Activated naive CD4-positive, alpha-beta T cell treated with anti-CD3 and anti-CD28 coated beads, Interleukin-2, amount 10 ng/mL, durations not matched to agents 7 days and 5 days (primary cell): ENCODE measurements at regions of chr1 and their contacts with region 1.

Region 1: GRCh38 chr1:155017041-155017945 is 14.7 kb downstream of the ZBTB7B start:
- DNase-seq: peak; percentile 90
- H3K4me3 Mint-ChIP-seq: peak overlapping the region; percentile 26
- H3K27ac Mint-ChIP-seq: peak overlapping the region; percentile 83
- H3K4me1 Mint-ChIP-seq: peaks cover 71% of the 10 kb centered on the region
- H3K27me3 Mint-ChIP-seq: no peaks in the 10 kb centered on the region

Region 2: DNA sequence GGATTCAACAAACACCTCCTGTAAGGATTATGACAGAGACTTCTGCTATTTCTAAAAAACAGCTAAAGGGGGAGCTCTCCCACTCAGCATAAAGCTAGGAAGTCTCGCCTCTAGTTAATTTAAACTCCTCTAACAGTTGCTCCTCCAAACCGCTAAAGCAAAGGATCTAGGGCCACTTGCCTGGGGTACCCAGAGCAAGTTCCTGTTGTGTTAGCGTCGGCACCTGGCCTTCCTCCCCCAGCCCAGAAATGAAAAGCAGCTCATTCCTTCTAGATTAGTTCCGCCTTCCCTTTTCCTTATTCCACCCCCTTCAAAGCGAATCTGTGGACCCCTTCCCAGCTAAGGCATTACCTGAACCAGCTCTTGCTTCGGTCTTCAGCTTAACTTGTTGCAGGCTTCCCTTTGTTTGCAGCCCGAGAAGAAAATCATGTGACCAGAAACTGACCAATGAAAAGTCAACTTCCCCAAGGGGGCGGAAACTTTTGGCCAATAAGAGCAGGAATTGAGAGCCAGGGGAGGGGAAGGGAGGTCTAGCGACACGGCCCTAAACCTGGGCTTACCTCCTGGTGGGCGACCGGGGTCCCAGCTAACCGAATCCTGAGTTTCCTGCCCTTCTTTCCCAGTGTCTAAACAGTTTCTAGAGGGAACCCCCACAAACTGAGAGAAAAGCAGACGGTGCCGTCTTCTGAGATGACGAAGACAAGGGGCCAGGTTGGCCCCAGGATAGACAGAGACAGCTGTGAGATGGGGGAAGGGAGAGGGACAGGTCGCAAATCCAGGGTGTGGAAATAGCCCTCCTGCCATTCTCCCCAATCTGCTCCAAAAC is 61.4 kb before region 1 on chr1 and contains the start of gene PBXIP1:
- CTCF ChIA-PET with region 1: interaction called, 13 read pairs
- DNase-seq: peak; percentile 89
- H3K4me3 Mint-ChIP-seq: peak within 1 kb of the TSS; percentile 88
- H3K27ac Mint-ChIP-seq: peak within 1 kb of the TSS; percentile 93
- H3K4me1 Mint-ChIP-seq: peaks cover 84% of the 10 kb centered on the region
- H3K27me3 Mint-ChIP-seq: no peaks in the 10 kb centered on the region

Region 3: DNA sequence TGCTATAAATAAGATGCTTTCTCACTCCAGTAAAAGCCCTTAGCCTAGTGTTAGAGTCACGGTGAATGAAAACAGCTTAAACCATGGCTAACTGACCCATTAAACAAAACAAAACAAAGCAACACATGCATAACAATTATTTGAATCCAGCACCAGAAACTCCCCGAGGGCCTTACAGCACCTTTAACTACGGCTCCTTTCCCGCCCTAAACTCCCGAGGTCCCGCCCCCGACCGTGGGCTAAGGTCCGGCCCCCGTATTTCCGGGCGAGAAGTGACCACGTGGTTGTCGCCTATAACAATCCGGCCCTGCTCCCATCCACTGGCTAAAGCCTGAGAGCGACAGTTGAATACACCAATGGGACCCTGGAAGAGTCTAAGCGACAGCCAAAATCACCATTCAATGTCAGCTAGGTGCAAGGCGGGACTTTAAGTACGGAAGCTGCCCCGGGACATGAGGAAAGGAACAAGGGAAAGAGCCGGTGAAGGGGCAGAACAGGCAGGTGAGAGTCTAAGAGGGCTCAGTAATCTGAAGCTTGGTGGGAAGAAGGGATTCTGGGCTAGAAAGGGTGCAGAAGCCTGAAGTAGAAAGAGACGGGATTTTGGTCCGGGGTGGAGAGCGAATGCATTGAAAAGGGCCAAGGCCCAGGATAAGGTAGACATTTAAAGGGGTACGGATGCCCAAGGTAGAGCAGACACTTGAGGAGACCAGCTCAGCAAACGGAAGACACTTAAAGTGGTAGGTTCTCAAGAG is 34.2 kb before region 1 on chr1 and contains the start of gene FLAD1:
- CTCF ChIA-PET with region 1: interaction called, 26 read pairs
- DNase-seq: peak; percentile 98
- H3K4me3 Mint-ChIP-seq: no peak within 1 kb of the TSS
- H3K27ac Mint-ChIP-seq: no peak within 1 kb of the TSS
- H3K4me1 Mint-ChIP-seq: peaks cover 30% of the 10 kb centered on the region
- H3K27me3 Mint-ChIP-seq: no peaks in the 10 kb centered on the region

Region 4: GRCh38 chr1:154992721-154993571 is 24.3 kb before region 1 on chr1:
- CTCF ChIA-PET with region 1: interaction called, 48 read pairs
- DNase-seq: no peak
- H3K4me3 Mint-ChIP-seq: no peak overlapping the region
- H3K27ac Mint-ChIP-seq: no peak overlapping the region
- H3K4me1 Mint-ChIP-seq: peaks cover 27% of the 10 kb centered on the region
- H3K27me3 Mint-ChIP-seq: no peaks in the 10 kb centered on the region

Region 5: DNA sequence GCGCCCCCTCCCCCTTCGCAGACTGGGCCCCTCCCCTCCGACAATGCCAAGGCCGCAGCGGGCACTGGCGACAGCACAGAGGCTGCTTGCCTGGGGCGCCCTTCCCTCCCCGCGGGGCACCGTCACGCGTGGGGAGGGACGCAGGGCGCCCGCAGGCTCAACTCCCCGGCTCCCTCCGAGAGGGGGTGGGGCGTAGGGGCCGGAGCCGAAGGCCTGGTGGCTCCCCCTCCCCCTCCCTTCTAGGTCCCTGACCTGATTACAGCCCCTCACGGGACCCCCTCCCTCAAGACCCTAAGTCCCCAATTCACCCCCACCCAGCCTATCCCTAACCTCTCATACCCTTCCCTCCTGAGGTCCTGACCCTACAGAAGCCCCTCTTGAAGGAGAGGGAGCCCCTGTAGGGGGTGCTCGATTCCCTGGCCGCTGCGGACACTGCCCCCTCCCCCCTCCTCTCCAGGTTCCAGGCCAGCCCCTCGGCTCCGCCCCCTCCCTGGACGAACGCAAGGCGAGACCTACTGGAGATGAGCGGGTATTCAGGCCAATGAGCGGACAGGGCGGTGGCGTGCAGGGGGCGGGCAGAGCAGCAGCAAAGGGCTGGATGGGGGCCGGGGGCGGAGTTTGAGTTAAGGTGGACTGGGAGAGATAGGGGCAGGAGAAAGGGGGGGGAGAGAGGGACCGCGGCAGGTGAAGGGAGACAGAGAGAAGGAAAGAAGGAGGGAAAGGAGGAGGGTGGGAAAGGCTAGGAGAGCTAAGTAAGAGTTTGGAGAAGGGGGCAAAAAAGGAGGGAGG is 15.4 kb before region 1 on chr1:
- CTCF ChIA-PET with region 1: interaction called, 48 read pairs
- DNase-seq: peak; percentile 100
- H3K4me3 Mint-ChIP-seq: peak overlapping the region; percentile 92
- H3K27ac Mint-ChIP-seq: peak overlapping the region; percentile 95
- H3K4me1 Mint-ChIP-seq: peaks cover 61% of the 10 kb centered on the region
- H3K27me3 Mint-ChIP-seq: peaks cover 4% of the 10 kb centered on the region

Region 6: GRCh38 chr1:155044812-155045690 is 27.8 kb after region 1 on chr1:
- CTCF ChIA-PET with region 1: interaction called, 14 read pairs
- DNase-seq: peak; percentile 83
- H3K4me3 Mint-ChIP-seq: no peak overlapping the region
- H3K27ac Mint-ChIP-seq: no peak overlapping the region
- H3K4me1 Mint-ChIP-seq: peaks cover 20% of the 10 kb centered on the region
- H3K27me3 Mint-ChIP-seq: peaks cover 38% of the 10 kb centered on the region

Region 7: GRCh38 chr1:155063550-155064110 is 46.3 kb after region 1 on chr1 and contains the start of gene EFNA4:
- CTCF ChIA-PET with region 1: interaction called, 20 read pairs
- DNase-seq: peak; percentile 93
- H3K4me3 Mint-ChIP-seq: peak within 1 kb of the TSS; percentile 76
- H3K27ac Mint-ChIP-seq: peak within 1 kb of the TSS; percentile 61
- H3K4me1 Mint-ChIP-seq: peaks cover 36% of the 10 kb centered on the region
- H3K27me3 Mint-ChIP-seq: no peaks in the 10 kb centered on the region